ENCODE measurements at regions of chr14 and their contacts with region 1.

Region 1: DNA sequence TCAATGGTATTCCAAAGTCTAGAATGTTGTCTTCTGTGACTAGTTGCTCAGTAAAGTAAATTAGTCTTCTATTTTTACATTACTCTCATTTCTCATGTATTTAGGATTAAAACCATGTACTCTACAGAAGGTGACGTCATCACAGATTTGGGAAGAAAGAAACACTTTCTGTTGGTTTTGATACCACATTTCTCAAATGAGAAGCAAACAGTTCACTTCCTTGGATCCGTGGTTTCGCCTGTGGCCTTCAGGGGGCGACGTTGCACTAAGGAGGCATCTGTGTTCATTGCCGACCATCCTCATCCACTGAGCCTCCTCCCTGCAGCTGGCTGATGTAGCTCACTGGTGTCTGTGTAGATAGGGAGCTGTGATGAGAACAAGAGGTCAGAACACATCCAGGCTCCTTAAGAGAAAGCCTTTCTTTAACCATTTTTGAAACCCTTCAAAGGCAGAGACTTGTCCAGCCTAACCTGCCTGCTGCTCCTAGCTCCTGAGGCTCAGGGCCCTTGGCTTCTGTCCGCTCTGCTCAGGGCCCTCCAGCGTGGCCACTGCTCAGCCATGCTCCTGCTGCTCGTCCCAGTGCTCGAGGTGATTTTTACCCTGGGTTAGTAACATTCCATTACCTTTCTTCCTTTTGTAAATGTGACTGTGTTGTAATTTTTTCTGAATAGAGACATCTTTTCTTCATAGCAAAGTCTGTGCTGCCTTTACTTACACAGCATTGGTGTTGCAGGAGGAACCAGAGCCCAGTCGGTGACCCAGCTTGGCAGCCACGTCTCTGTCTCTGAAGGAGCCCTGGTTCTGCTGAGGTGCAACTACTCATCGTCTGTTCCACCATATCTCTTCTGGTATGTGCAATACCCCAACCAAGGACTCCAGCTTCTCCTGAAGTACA is 220.6 kb upstream of the OR4E1 start:
- DNase-seq: peak; percentile 80
- H3K4me3 ChIP-seq: peak overlapping the region; percentile 34
- H3K27ac ChIP-seq: peak overlapping the region; percentile 71
- H3K4me1 ChIP-seq: peaks cover 20% of the 10 kb centered on the region
- CTCF ChIP-seq: peak; percentile 90

Region 2: GRCh38 chr14:21791749-21792148 is 102.5 kb before region 1 on chr14:
- CTCF ChIA-PET with region 1: no interaction called
- POLR2A ChIA-PET with region 1: no interaction called
- intact Hi-C with region 1: no loop called
- DNase-seq: no peak
- H3K4me3 ChIP-seq: no peak overlapping the region
- H3K27ac ChIP-seq: no peak overlapping the region
- H3K4me1 ChIP-seq: no peaks in the 10 kb centered on the region
- CTCF ChIP-seq: no peak

Region 3: GRCh38 chr14:21917699-21918436 is 23.6 kb after region 1 on chr14:
- CTCF ChIA-PET with region 1: interaction called, 5 read pairs
- POLR2A ChIA-PET with region 1: interaction called, 7 read pairs
- intact Hi-C with region 1: loop called (anchors 2 kb)
- DNase-seq: peak; percentile 89
- H3K4me3 ChIP-seq: peak overlapping the region; percentile 56
- H3K27ac ChIP-seq: peak overlapping the region; percentile 21
- H3K4me1 ChIP-seq: peaks cover 47% of the 10 kb centered on the region
- CTCF ChIP-seq: peak; percentile 100

Region 4: DNA sequence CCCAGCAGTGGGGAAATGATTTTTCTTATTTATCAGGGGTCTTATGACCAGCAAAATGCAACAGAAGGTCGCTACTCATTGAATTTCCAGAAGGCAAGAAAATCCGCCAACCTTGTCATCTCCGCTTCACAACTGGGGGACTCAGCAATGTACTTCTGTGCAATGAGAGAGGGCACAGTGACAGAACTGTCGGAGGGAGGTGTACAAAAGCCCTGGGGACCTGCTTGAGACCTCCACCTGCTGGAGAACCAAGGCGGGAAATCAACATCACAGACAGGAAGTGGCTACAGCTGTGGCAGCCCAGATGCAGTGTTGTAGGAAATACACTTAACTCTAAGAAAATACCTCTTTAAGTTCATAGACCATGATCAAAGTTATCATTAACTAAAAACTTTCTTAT is 30.2 kb after region 1 on chr14:
- CTCF ChIA-PET with region 1: interaction called, 3 read pairs
- POLR2A ChIA-PET with region 1: interaction called, 7 read pairs
- intact Hi-C with region 1: loop called (anchors 2 kb)
- DNase-seq: peak; percentile 98
- H3K4me3 ChIP-seq: peak overlapping the region; percentile 40
- H3K27ac ChIP-seq: peak overlapping the region; percentile 91
- H3K4me1 ChIP-seq: peaks cover 36% of the 10 kb centered on the region
- CTCF ChIP-seq: peak; percentile 62

Region 5: GRCh38 chr14:21933681-21934080 is 39.4 kb after region 1 on chr14:
- CTCF ChIA-PET with region 1: no interaction called
- POLR2A ChIA-PET with region 1: interaction called, 7 read pairs
- intact Hi-C with region 1: loop called (anchors 2 kb)
- DNase-seq: peak; percentile 62
- H3K4me3 ChIP-seq: no peak overlapping the region
- H3K27ac ChIP-seq: no peak overlapping the region
- H3K4me1 ChIP-seq: no peaks in the 10 kb centered on the region
- CTCF ChIP-seq: peak; percentile 91

Region 6: DNA sequence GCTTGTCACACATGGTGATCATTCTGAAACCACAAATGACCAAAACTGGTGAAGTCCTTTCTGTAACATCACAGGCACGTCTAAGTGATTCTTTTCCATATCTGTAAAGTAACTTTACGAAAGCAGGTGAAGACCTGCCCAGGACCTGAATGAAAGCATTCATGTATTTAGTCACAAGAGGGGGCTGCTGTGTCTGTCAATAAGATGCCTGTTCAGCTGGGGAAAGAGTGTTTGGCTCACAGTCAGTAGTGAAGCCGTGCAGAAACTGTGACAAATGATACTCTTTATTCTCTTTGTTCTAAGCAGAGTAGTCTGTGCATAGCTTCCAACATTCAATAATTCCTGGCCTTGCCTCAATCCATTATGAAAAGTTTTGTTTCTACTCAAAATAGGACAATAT is 152.9 kb after region 1 on chr14:
- CTCF ChIA-PET with region 1: no interaction called
- POLR2A ChIA-PET with region 1: no interaction called
- intact Hi-C with region 1: no loop called
- DNase-seq: peak; percentile 51
- H3K4me3 ChIP-seq: no peak overlapping the region
- H3K27ac ChIP-seq: no peak overlapping the region
- H3K4me1 ChIP-seq: no peaks in the 10 kb centered on the region
- CTCF ChIP-seq: peak; percentile 74

Measured in OCI-LY7 (cell line).